ENCODE measurements at regions of chr7 and their contacts with region 1.

Region 1: GRCh38 chr7:149081914-149082313 is 8.6 kb downstream of the ZNF786 start:
- DNase-seq: no peak
- H3K4me3 ChIP-seq: no peak overlapping the region
- H3K27ac ChIP-seq: no peak overlapping the region
- H3K4me1 ChIP-seq: no peaks in the 10 kb centered on the region
- H3K27me3 ChIP-seq: no peaks in the 10 kb centered on the region
- CTCF ChIP-seq: no peak

Region 2: DNA sequence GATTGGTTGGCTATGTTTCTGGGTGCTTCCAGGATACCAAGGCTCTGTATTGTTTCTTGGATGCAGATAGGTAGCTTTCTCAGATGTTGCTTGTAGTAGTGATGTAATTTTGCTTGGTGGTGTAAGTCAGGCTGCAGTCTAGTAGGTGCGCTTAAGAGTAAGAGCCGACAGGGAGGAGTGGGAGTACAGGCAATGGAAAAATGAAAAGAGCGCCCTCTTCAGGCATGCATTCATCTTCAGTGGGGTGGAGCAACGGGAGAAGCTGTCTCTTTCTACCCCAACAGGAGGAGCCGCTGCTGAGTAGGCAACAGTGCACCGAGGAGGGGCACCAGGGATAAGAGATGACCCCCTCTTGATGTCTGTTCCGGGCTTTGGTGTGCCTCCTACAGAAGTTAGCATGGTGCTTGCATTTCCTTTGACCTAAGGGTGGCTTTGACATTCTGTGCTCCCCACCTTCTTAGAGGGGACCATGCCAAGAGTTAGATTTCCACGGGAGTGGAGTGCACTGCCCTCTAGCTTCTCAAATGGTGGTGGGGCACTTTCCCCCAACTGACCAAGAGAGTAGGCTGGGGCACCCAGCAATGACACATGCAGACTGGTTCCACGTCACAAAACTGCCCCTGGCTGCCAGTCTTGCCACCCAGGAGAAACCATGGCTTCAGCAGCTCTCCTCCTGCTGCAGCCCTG is 236.2 kb after region 1 on chr7:
- CTCF ChIA-PET with region 1: interaction called, 10 read pairs
- POLR2A ChIA-PET with region 1: no interaction called
- intact Hi-C with region 1: no loop called
- DNase-seq: no peak
- H3K4me3 ChIP-seq: no peak overlapping the region
- H3K27ac ChIP-seq: no peak overlapping the region
- H3K4me1 ChIP-seq: no peaks in the 10 kb centered on the region
- H3K27me3 ChIP-seq: no peaks in the 10 kb centered on the region
- CTCF ChIP-seq: no peak; the same call in 1 of the 2 replicates